Gastrocnemius medialis (tissue), 4 donors: ENCODE measurements at regions of chr6 and their contacts with region 1.

Region 1: DNA sequence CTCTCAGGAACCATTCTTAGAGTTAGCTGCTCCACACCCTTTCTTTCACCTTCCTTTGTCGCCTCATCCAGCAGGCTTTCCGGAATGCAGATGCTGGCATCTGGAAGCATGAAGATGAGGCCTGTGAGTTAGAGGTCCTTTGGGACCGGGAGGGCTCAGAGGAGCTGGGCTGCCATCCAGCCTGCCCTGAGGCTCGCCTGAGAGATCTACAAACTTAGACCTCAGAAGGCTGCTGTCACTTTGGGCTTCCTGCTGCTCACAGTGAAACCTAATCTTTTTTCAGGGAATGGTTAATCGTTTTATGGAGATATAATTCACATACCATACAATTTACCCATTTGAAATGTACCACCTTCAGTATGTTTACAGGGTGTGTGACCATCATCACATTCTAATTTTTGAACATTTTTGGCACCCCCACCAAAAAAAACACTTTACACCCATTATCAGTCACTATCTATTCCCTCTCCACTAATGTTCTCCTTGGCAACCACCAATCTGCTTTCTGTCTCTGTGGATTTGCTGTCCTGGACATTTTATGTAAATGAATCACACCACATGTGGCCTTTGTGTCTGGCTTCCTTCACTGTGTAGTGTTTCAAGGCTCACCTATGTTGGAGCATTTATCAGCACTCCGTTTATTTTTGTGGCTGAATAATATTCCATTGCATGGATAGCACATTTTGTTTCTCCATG is 20.0 kb upstream of the MPC1 start:
- DNase-seq: no peak
- ATAC-seq: no peak
- H3K4me3 ChIP-seq: no peak overlapping the region
- H3K27ac ChIP-seq: no peak overlapping the region
- H3K4me1 ChIP-seq: no peaks in the 10 kb centered on the region
- H3K27me3 ChIP-seq: peaks cover 0 to 4% (median 0%) of the 10 kb centered on the region in 3 donors
- CTCF ChIP-seq: no peak
- POLR2A ChIP-seq: no peak

Region 2: GRCh38 chr6:166073082-166073481 is 329.6 kb before region 1 on chr6:
- in situ Hi-C with region 1: no loop called
- intact Hi-C with region 1: no loop called
- DNase-seq: no peak
- ATAC-seq: no peak
- H3K4me3 ChIP-seq: no peak overlapping the region
- H3K27ac ChIP-seq: no peak overlapping the region
- H3K4me1 ChIP-seq: no peaks in the 10 kb centered on the region
- H3K27me3 ChIP-seq: peaks cover 0 to 2% (median 0%) of the 10 kb centered on the region in 3 donors
- CTCF ChIP-seq: no peak
- POLR2A ChIP-seq: no peak

Region 3: DNA sequence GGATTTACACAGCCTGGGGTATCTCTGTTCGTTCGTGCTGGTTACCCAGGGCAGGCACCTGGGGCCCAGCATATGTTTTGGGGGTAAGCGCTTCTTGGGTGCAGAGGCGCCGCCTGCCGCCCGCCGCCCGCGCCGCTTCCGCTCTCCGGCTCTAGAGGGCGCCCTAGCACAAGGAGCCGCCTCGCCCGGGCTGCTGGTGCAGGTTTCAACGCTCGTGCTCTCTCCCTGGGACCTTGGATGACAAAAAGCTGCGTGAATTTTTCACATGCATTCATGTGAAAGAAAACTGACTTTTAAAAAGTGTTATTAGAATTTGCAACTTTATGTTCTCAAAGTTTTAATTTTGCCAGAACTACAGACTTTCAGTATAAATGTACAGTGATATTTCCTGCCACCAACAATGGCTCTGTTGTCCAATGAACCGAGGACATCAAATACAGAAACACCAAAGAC is 127.0 kb before region 1 on chr6:
- in situ Hi-C with region 1: loop called (anchors 5 to 10 kb)
- intact Hi-C with region 1: loop called (anchors 1 kb)
- DNase-seq: peak in 1 of 2 donors; percentile 42
- ATAC-seq: peak; percentile 62 to 77
- H3K4me3 ChIP-seq: no peak overlapping the region
- H3K27ac ChIP-seq: no peak overlapping the region
- H3K4me1 ChIP-seq: no peaks in the 10 kb centered on the region
- H3K27me3 ChIP-seq: no peaks in the 10 kb centered on the region
- CTCF ChIP-seq: peak; percentile 86 to 100 (median 91)
- POLR2A ChIP-seq: no peak

Region 4: GRCh38 chr6:166313255-166314070 is 89.3 kb before region 1 on chr6:
- in situ Hi-C with region 1: no loop called
- intact Hi-C with region 1: loop called (anchors 1 kb)
- DNase-seq: no peak
- ATAC-seq: no peak
- H3K4me3 ChIP-seq: no peak overlapping the region
- H3K27ac ChIP-seq: no peak overlapping the region
- H3K4me1 ChIP-seq: no peaks in the 10 kb centered on the region
- H3K27me3 ChIP-seq: peaks cover 9 to 15% (median 11%) of the 10 kb centered on the region in 3 donors
- CTCF ChIP-seq: peak; percentile 44 to 72 (median 53)
- POLR2A ChIP-seq: no peak

Region 5: GRCh38 chr6:166423781-166424180 is 21.1 kb after region 1 on chr6:
- in situ Hi-C with region 1: no loop called
- intact Hi-C with region 1: no loop called
- DNase-seq: no peak
- ATAC-seq: no peak
- H3K4me3 ChIP-seq: no peak overlapping the region
- H3K27ac ChIP-seq: no peak overlapping the region
- H3K4me1 ChIP-seq: no peaks in the 10 kb centered on the region
- H3K27me3 ChIP-seq: no peaks in the 10 kb centered on the region
- CTCF ChIP-seq: no peak
- POLR2A ChIP-seq: no peak